Vagina (tissue), 2 donors: ENCODE measurements at regions of chr7 and their contacts with region 1.

Region 1: GRCh38 chr7:73606801-73607691 is 17.3 kb downstream of the MLXIPL start:
- DNase-seq: no peak
- H3K4me3 ChIP-seq: no peak overlapping the region
- H3K27ac ChIP-seq: no peak overlapping the region
- H3K4me1 ChIP-seq: no peaks in the 10 kb centered on the region
- H3K27me3 ChIP-seq: no peaks in the 10 kb centered on the region
- CTCF ChIP-seq: peak; percentile 86 to 91 (median 86)
- POLR2A ChIP-seq: no peak

Region 2: DNA sequence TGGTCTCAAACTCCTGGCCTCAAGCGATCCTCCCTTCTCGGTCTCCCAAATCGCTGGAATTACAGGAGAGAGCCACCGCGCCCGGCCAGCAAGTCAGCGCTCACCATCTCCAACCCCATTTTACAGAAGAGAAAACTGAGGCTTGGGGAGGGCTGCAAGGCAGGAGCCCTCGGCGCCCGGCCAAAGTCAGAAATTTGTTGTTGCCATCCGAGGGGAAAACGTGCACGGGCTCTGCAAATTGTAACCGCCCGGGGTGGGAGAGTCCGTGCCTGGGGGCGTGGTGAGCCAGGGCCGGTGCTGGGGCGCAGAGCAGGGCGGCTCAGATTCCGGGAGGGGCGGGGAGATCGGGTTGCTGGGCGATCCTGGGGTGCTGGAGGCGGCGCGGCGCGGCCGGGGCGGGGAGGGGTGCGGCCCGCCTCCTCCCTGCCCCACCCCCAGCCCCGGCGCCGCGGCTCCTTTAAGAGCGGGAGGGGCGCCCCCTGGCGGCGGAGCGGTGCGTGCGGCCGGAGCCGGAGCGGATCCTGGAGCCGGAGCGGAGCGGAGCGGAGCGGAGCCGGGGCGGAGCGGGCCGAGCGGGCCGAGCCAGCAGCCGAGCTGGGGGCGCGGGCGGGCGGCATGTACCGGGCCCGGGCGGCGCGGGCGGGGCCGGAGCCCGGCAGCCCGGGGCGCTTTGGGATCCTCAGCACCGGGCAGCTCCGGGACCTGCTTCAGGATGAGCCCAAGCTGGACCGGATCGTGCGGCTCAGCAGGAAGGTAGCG is 60.5 kb after region 1 on chr7 and contains the start of gene VPS37D:
- intact Hi-C with region 1: loop called (anchors 10 kb)
- DNase-seq: no peak
- H3K4me3 ChIP-seq: peak within 1 kb of the TSS; percentile 58 to 97
- H3K27ac ChIP-seq: no peak within 1 kb of the TSS
- H3K4me1 ChIP-seq: peaks cover 18% of the 10 kb centered on the region
- H3K27me3 ChIP-seq: no peaks in the 10 kb centered on the region
- CTCF ChIP-seq: peak; percentile 47 to 65 (median 55)
- POLR2A ChIP-seq: peak in 1 of 2 donors; percentile 38
- total RNA-seq, gene VPS37D: 5.4 TPM

Region 3: GRCh38 chr7:73721377-73721817 is 114.4 kb after region 1 on chr7:
- intact Hi-C with region 1: loop called (anchors 5 kb)
- DNase-seq: no peak
- H3K4me3 ChIP-seq: no peak overlapping the region
- H3K27ac ChIP-seq: no peak overlapping the region
- H3K4me1 ChIP-seq: peaks cover 28% of the 10 kb centered on the region
- H3K27me3 ChIP-seq: no peaks in the 10 kb centered on the region
- CTCF ChIP-seq: no peak
- POLR2A ChIP-seq: no peak